Breast epithelium (tissue), 4 donors: ENCODE measurements at regions of chr2 and their contacts with region 1.

Region 1: GRCh38 chr2:165924946-165925345 is 28.6 kb downstream of the TTC21B start:
- DNase-seq: no peak
- H3K4me3 ChIP-seq: no peak overlapping the region
- H3K27ac ChIP-seq: no peak overlapping the region
- H3K4me1 ChIP-seq: no peaks in the 10 kb centered on the region
- H3K27me3 ChIP-seq: no peaks in the 10 kb centered on the region
- CTCF ChIP-seq: no peak
- POLR2A ChIP-seq: no peak

Region 2: GRCh38 chr2:165953655-165954606 is 29.0 kb after region 1 on chr2 and contains the start of gene TTC21B:
- intact Hi-C with region 1: loop called (anchors 2 kb)
- DNase-seq: peak; percentile 87 to 91
- H3K4me3 ChIP-seq: peak within 1 kb of the TSS; percentile 79 to 81 (median 79)
- H3K27ac ChIP-seq: peak within 1 kb of the TSS; percentile 87 to 89
- H3K4me1 ChIP-seq: peaks cover 0 to 5% of the 10 kb centered on the region in 2 donors
- H3K27me3 ChIP-seq: no peaks in the 10 kb centered on the region
- CTCF ChIP-seq: peak; percentile 70 to 84 (median 81)
- POLR2A ChIP-seq: peak; percentile 40
- total RNA-seq, gene TTC21B: 28.6 to 54.3 (median 49.8) TPM